Transverse colon (tissue), 4 donors: ENCODE measurements at regions of chr1 and their contacts with region 1.

Region 1: DNA sequence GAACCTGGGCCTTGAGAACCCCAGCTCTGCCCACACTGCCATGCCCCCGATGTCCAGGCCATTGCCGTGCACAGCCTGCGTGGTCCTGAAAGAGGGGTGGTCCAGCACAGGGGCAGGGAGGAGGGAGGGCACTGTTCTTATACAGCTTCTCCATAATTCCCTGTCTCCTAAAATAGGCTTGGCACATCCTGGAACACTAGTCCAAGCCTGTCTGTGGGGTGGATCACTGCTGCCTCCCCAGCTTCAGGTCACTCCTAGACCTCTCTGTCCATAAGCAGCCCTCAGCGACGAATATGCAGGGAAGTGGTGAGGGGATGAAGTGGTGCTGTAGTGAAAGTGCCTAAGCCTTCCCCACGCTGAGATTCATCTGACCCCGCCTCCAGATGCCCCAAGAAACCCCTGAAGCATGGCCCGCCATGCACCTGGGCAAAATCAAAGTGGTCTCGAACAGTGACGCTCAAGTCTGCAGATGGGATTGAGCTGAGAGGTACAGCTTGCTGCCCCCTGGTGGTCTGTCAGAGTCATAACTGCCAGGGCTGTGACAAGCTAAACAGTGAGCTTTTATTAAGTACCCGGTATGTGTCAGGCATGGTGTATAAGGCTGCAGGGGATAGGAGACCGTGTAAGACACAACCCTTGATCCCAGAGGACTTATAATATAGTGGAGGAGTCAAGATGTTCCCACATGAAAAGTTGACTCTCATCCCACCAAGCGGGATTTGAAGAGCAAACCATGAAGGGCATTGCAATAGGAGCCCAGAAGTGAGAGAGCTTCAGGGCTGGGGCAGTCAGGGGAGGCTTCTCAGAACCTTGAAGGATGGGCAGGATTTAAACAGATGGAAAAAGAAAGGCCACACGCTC is 66.6 kb downstream of the FAM163A start:
- DNase-seq: peak; percentile 59
- H3K4me3 ChIP-seq: no peak overlapping the region
- H3K27ac ChIP-seq: no peak overlapping the region
- H3K4me1 ChIP-seq: peaks cover 0 to 7% (median 4%) of the 10 kb centered on the region in 4 donors
- H3K27me3 ChIP-seq: no peaks in the 10 kb centered on the region
- CTCF ChIP-seq: peak; percentile 84 to 90 (median 86)
- EP300 ChIP-seq: no peak
- POLR2A ChIP-seq: no peak

Region 2: GRCh38 chr1:179706339-179706941 is 103.3 kb before region 1 on chr1:
- in situ Hi-C with region 1: loop called (anchors 5 to 10 kb)
- intact Hi-C with region 1: loop called (anchors 1 kb)
- DNase-seq: peak; percentile 49
- H3K4me3 ChIP-seq: no peak overlapping the region
- H3K27ac ChIP-seq: no peak overlapping the region
- H3K4me1 ChIP-seq: peaks cover 0 to 4% (median 0%) of the 10 kb centered on the region in 4 donors
- H3K27me3 ChIP-seq: no peaks in the 10 kb centered on the region
- CTCF ChIP-seq: peak; percentile 63 to 70 (median 67)
- EP300 ChIP-seq: no peak
- POLR2A ChIP-seq: no peak